MCF 10A (cell line): ENCODE measurements at regions of chr13 and their contacts with region 1.

Region 1: GRCh38 chr13:30617315-30618185 is at the start of gene USPL1:
- DNase-seq: peak; percentile 97
- H3K4me3 Mint-ChIP-seq: no peak within 1 kb of the TSS
- H3K27ac Mint-ChIP-seq: no peak within 1 kb of the TSS
- H3K4me1 Mint-ChIP-seq: peaks cover 20% of the 10 kb centered on the region
- H3K27me3 Mint-ChIP-seq: no peaks in the 10 kb centered on the region
- CTCF ChIP-seq: no peak
- total RNA-seq, gene USPL1: 9.8 and 11.8 TPM in 2 replicates

Region 2: GRCh38 chr13:29850224-29850898 is 767.2 kb before region 1 on chr13 and contains the start of gene UBL3:
- CTCF ChIA-PET with region 1: no interaction called
- POLR2A ChIA-PET with region 1: interaction called, 26 read pairs
- intact Hi-C with region 1: no loop called
- DNase-seq: peak; percentile 97
- H3K4me3 Mint-ChIP-seq: peak within 1 kb of the TSS; percentile 89
- H3K27ac Mint-ChIP-seq: peak within 1 kb of the TSS; percentile 100
- H3K4me1 Mint-ChIP-seq: peaks cover 12% of the 10 kb centered on the region
- H3K27me3 Mint-ChIP-seq: no peaks in the 10 kb centered on the region
- CTCF ChIP-seq: no peak
- total RNA-seq, gene UBL3: 18.2 and 22.4 TPM in 2 replicates

Region 3: DNA sequence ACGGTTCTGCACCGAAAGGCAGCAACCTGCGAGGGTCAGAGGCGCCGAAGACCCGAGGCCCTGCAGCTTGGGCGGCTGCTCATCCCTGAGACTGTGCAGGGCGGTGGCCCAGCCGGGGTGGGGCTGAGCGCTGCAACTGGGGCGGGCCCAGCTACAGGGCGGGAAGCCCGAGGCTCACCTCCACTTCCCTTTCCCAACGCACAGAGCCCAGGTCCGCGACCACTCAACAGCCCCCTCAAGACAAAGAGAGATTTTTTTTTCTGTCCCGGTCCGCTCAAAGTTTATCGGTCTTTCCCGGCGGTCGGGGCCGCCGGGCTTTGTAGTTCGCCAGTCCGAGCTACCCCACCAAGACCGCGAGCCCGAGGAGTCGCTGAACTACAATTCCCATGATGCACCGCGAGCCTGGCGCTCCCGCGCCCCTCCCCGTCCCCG is 310.8 kb before region 1 on chr13:
- CTCF ChIA-PET with region 1: no interaction called
- POLR2A ChIA-PET with region 1: interaction called, 21 read pairs
- intact Hi-C with region 1: no loop called
- DNase-seq: peak; percentile 88
- H3K4me3 Mint-ChIP-seq: peak overlapping the region; percentile 78
- H3K27ac Mint-ChIP-seq: no peak overlapping the region
- H3K4me1 Mint-ChIP-seq: peaks cover 43% of the 10 kb centered on the region
- H3K27me3 Mint-ChIP-seq: no peaks in the 10 kb centered on the region
- CTCF ChIP-seq: no peak

Region 4: DNA sequence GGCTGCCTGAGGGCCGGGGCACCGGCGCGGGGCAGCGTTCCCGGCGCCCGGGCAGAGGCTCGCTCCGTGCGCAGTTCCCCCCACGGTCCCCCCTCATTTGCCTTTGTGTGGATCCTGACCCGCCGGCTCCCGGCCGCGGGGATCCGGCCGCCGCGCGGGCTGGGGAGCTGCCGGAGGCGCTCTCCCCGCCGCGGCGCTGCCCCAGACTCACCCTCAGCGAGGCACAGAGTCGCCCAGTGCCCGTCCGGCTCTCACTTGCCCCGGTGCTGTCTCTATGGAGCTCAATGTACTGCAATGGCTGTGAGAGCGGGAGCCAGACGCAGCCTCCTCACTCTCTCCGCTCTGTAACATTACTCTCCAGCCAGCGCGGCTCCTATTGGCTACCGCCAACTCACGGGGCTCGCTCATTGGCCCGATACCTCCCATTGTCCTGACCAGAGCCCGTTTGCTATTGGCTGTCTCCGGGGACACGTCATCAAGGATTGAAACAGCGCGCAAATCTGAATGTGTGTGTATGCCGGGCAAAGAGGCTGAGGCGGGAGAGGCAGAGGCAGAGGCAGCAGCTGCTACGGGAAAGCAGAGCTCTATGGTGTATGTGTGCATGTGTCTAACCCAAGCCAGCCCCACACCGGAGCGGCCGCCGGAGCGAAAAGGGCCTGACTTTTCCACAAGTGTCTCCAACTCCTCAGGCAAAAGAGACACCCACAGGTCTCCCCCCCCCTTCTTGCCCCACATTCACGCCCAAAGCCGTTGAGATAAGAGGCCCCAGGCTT is 151.8 kb before region 1 on chr13 and contains the start of gene HMGB1:
- CTCF ChIA-PET with region 1: interaction called, 10 read pairs
- POLR2A ChIA-PET with region 1: interaction called, 81 read pairs
- intact Hi-C with region 1: loop called (anchors 1 kb)
- DNase-seq: peak; percentile 99
- H3K4me3 Mint-ChIP-seq: peak within 1 kb of the TSS; percentile 89
- H3K27ac Mint-ChIP-seq: peak within 1 kb of the TSS; percentile 97
- H3K4me1 Mint-ChIP-seq: peaks cover 11% of the 10 kb centered on the region
- H3K27me3 Mint-ChIP-seq: no peaks in the 10 kb centered on the region
- CTCF ChIP-seq: no peak
- total RNA-seq, gene HMGB1: 302 and 307 TPM in 2 replicates

Region 5: GRCh38 chr13:30673669-30674521 is 56.3 kb after region 1 on chr13:
- CTCF ChIA-PET with region 1: no interaction called
- POLR2A ChIA-PET with region 1: interaction called, 8 read pairs
- intact Hi-C with region 1: loop called (anchors 2 kb)
- DNase-seq: peak; percentile 83
- H3K4me3 Mint-ChIP-seq: peak overlapping the region; percentile 75
- H3K27ac Mint-ChIP-seq: peak overlapping the region; percentile 16
- H3K4me1 Mint-ChIP-seq: no peaks in the 10 kb centered on the region
- H3K27me3 Mint-ChIP-seq: no peaks in the 10 kb centered on the region
- CTCF ChIP-seq: peak; percentile 54

Region 6: DNA sequence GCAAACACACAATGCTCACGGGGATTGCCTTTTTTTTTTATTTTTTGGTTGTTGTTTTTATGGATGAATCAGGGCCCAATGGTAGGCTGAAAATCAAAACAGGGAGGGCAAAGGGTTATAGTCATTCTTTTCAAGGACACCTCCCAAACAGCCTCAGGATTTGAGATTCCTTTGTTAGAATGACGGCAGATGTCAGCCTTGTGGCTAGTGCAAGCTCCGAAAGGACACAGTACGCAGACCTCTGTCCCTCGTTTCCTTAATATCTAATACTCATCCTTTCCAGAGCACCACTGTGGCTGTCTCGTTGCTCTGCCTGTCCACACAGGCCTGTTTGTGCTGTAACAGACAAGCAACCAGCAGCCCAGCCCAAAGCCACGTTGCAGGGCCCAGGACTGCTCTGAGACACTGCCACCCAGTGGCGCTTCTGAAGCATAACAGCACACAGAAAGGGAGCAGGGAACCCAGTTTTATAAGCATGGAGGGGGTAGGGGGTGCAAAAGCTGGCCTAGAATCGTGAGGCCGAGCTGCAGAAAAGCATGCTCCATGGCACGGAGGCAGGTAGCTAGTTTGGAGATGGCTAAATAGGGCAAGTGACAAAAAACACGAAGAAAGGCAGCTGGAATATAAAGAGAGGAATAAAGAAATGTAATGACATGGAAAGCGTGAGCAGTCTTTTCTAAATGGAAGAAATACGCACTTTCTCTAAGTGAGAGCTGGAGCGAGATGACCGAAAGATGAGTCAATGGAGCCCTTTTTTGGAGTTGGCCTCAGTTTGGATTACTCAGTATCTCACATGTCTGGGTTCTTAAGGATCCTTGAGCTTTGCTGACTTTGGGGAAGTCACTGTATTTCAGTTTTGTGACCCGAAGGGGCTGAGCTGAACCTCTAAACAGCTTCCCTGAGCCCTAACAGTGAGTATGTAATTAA is 247.8 kb after region 1 on chr13:
- CTCF ChIA-PET with region 1: interaction called, 3 read pairs
- POLR2A ChIA-PET with region 1: interaction called, 26 read pairs
- intact Hi-C with region 1: loop called (anchors 2 kb)
- DNase-seq: peak; percentile 89
- H3K4me3 Mint-ChIP-seq: peak overlapping the region; percentile 38
- H3K27ac Mint-ChIP-seq: peak overlapping the region; percentile 85
- H3K4me1 Mint-ChIP-seq: peaks cover 38% of the 10 kb centered on the region
- H3K27me3 Mint-ChIP-seq: no peaks in the 10 kb centered on the region
- CTCF ChIP-seq: peak; percentile 93